ENCODE measurements at regions of chr5 and their contacts with region 1.

Region 1: GRCh38 chr5:54844905-54845566 is 140.4 kb downstream of the ESM1 start:
- DNase-seq: no peak
- ATAC-seq: no peak
- H3K4me3 Mint-ChIP-seq: no peak overlapping the region
- H3K27ac Mint-ChIP-seq: no peak overlapping the region
- H3K4me1 Mint-ChIP-seq: peaks cover 12% of the 10 kb centered on the region
- H3K27me3 Mint-ChIP-seq: no peaks in the 10 kb centered on the region
- CTCF ChIP-seq: peak; percentile 31; the same call in 1 of the 2 replicates

Region 2: DNA sequence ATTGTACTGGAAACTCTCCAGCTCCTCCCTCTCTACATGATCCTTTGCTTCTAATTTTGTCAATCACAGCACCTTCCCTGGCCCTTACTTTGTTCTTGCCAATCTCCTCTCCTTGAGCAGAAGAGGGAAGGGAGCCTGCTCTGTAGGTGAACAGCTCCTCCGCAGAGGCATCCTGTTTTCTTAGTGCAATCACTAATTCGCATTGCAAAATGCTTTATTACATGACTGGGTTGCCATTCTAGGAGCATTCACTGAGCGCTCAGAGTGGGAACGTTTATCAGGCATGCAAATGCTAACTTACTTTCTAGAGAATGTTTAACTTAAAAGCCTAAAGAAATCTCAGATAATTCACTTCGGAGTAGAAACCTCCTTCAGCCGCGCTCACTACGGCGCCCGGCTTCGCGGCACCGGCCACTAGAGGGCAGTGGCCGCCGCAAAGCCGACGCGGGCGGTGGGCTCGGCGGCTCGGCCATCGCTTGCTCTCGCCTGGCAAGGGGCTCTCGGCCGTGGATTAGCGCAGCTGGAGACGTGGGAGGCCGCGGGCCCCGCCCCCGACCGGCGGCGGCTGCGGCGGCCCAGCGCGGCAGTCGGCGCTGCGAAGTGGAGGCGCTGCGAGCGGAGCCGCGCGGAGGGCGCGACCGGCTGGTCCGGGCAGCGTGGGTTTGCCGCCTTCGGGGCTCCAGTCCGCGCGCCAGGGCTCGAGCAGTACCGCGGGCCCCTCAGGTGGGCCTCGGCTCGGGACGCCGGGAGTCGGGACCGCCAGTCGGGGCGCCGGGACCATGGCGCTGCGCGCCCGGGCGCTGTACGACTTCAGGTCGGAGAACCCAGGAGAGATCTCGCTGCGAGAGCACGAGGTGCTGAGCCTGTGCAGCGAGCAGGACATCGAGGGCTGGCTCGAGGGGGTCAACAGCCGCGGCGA is 327.6 kb before region 1 on chr5 and contains the start of gene SNX18:
- CTCF ChIA-PET with region 1: interaction called, 55 read pairs
- POLR2A ChIA-PET with region 1: no interaction called
- DNase-seq: peak; percentile 88
- ATAC-seq: peak; percentile 62
- H3K4me3 Mint-ChIP-seq: peak within 1 kb of the TSS; percentile 70
- H3K27ac Mint-ChIP-seq: no peak within 1 kb of the TSS
- H3K4me1 Mint-ChIP-seq: peaks cover 34% of the 10 kb centered on the region
- H3K27me3 Mint-ChIP-seq: peaks cover 14% of the 10 kb centered on the region
- CTCF ChIP-seq: peak; percentile 85
- total RNA-seq, gene SNX18: 20.3 to 24.6 TPM (median 23.6 TPM) in 3 replicates

Region 3: DNA sequence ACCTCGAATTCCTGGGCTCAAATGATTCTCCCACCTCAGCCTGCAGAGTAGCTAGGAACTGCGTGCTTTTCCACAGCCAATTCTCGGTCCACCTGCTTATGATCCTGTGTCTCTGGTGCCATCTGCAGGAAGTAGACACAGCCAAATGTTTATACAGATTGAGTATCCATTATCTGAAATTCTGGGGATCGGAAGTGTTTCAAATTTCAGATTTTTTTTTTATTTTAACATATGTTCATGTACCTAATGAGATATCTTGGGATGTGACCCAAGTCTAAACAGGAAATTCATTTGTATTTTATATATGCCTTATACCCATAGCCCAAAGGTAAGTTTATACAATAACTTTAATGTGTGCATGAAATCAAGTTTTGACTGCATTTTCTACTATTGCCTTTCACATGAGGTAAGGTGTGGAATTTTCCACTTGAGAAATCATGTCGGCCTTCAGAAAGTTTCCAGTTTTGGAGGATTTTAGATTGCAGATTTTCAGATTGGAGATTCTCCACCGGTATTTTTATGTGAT is 50.8 kb after region 1 on chr5:
- CTCF ChIA-PET with region 1: interaction called, 11 read pairs
- POLR2A ChIA-PET with region 1: no interaction called
- DNase-seq: peak; percentile 17
- ATAC-seq: peak; percentile 69
- H3K4me3 Mint-ChIP-seq: no peak overlapping the region
- H3K27ac Mint-ChIP-seq: no peak overlapping the region
- H3K4me1 Mint-ChIP-seq: peaks cover 4% of the 10 kb centered on the region; the same call in 1 of the 2 replicates
- H3K27me3 Mint-ChIP-seq: peaks cover 3% of the 10 kb centered on the region; the same call in 1 of the 2 replicates
- CTCF ChIP-seq: no peak

Measured in WTC11 (cell line).